Naive thymus-derived CD4-positive, alpha-beta T cell (primary cell): ENCODE measurements at regions of chr16 and their contacts with region 1.

Region 1: GRCh38 chr16:23803591-23804123 is 32.1 kb upstream of the PRKCB start:
- DNase-seq: peak; percentile 39 to 71 (median 60)
- ATAC-seq: peak; percentile 94
- H3K4me3 ChIP-seq: no peak overlapping the region
- H3K4me3 Mint-ChIP-seq: peak overlapping the region in 9 of 10 donors; percentile 1 to 57 (median 19)
- H3K27ac ChIP-seq: no peak overlapping the region
- H3K27ac Mint-ChIP-seq: peak overlapping the region in 1 of 9 donors; percentile 7
- H3K4me1 ChIP-seq: peaks cover 0 to 7% of the 10 kb centered on the region in 2 donors
- H3K4me1 Mint-ChIP-seq: peaks cover 6 to 13% (median 11%) of the 10 kb centered on the region in 7 donors
- H3K27me3 ChIP-seq: no peaks in the 10 kb centered on the region
- H3K27me3 Mint-ChIP-seq: peaks cover 0 to 11% (median 0%) of the 10 kb centered on the region in 5 donors

Region 2: GRCh38 chr16:23729503-23730424 is 73.9 kb before region 1 on chr16:
- CTCF ChIA-PET with region 1: no interaction called
- POLR2A ChIA-PET with region 1: no interaction called
- intact Hi-C with region 1: loop called in 1 of 2 experiments (anchors 2 kb)
- DNase-seq: no peak
- ATAC-seq: no peak
- H3K4me3 ChIP-seq: no peak overlapping the region
- H3K4me3 Mint-ChIP-seq: no peak overlapping the region
- H3K27ac ChIP-seq: no peak overlapping the region
- H3K27ac Mint-ChIP-seq: no peak overlapping the region
- H3K4me1 ChIP-seq: no peaks in the 10 kb centered on the region
- H3K4me1 Mint-ChIP-seq: peaks cover 0 to 8% (median 4%) of the 10 kb centered on the region in 7 donors
- H3K27me3 ChIP-seq: no peaks in the 10 kb centered on the region
- H3K27me3 Mint-ChIP-seq: peaks cover 4 to 23% (median 13%) of the 10 kb centered on the region in 5 donors

Region 3: DNA sequence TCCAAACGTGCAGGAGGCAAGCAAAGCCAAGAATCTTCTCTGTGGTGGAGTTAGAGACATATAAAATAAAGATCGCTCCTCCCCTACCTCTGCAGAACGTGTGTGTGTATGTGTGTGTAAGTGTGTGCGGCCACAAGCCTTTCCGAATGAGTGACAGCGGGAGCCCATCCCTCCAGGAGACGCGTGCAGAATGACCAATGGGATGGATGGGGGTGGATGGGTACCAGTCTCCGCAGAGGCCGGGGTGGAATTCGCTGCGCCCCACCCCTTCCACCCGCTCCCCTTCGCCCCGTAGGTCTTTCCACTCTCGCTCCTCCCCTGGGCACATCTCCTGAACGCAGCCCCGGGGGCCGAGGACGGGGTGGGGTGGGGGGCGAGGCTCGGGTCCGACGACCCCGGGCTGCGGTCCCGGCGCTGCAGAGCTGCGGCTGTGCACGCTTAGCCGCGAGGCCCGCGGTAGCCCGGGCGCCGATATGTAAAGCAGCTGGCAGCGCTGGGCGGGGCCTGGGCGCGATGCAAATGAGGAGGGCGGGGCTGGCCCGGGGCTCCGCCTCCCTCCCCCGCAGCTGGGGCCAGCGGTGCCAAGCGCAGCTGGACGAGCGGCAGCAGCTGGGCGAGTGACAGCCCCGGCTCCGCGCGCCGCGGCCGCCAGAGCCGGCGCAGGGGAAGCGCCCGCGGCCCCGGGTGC is 31.9 kb after region 1 on chr16 and contains the start of gene PRKCB:
- CTCF ChIA-PET with region 1: interaction called, 18 read pairs
- POLR2A ChIA-PET with region 1: no interaction called
- intact Hi-C with region 1: loop called (anchors 1 to 2 kb)
- DNase-seq: peak; percentile 83 to 98 (median 90)
- ATAC-seq: peak; percentile 97
- H3K4me3 ChIP-seq: peak within 1 kb of the TSS; percentile 65
- H3K4me3 Mint-ChIP-seq: peak within 1 kb of the TSS; percentile 88 to 100 (median 98)
- H3K27ac ChIP-seq: peak within 1 kb of the TSS; percentile 65
- H3K27ac Mint-ChIP-seq: peak within 1 kb of the TSS; percentile 69 to 95 (median 85)
- H3K4me1 ChIP-seq: peaks cover 25 to 35% of the 10 kb centered on the region in 2 donors
- H3K4me1 Mint-ChIP-seq: peaks cover 52 to 65% (median 60%) of the 10 kb centered on the region in 7 donors
- H3K27me3 ChIP-seq: no peaks in the 10 kb centered on the region
- H3K27me3 Mint-ChIP-seq: peaks cover 0 to 3% (median 0%) of the 10 kb centered on the region in 5 donors
- total RNA-seq, gene PRKCB: 72.5 to 180 (median 73.1) TPM

Region 4: GRCh38 chr16:23877107-23878090 is 73.7 kb after region 1 on chr16:
- CTCF ChIA-PET with region 1: interaction called, 17 read pairs
- POLR2A ChIA-PET with region 1: no interaction called
- intact Hi-C with region 1: loop called in 1 of 2 experiments (anchors 1 kb)
- DNase-seq: peak in 5 of 9 donors; percentile 31 to 43 (median 35)
- ATAC-seq: peak; percentile 43
- H3K4me3 ChIP-seq: no peak overlapping the region
- H3K4me3 Mint-ChIP-seq: peak overlapping the region in 1 of 10 donors; percentile 1
- H3K27ac ChIP-seq: no peak overlapping the region
- H3K27ac Mint-ChIP-seq: peak overlapping the region in 6 of 9 donors; percentile 10 to 93 (median 74)
- H3K4me1 ChIP-seq: peaks cover 26 to 27% of the 10 kb centered on the region in 2 donors
- H3K4me1 Mint-ChIP-seq: peaks cover 53 to 77% (median 71%) of the 10 kb centered on the region in 7 donors
- H3K27me3 ChIP-seq: no peaks in the 10 kb centered on the region
- H3K27me3 Mint-ChIP-seq: no peaks in the 10 kb centered on the region

Region 5: GRCh38 chr16:24010440-24011089 is 206.9 kb after region 1 on chr16:
- CTCF ChIA-PET with region 1: interaction called, 180 read pairs
- POLR2A ChIA-PET with region 1: interaction called, 8 read pairs
- intact Hi-C with region 1: loop called (anchors 1 kb)
- DNase-seq: peak; percentile 46 to 82 (median 73)
- ATAC-seq: peak; percentile 58
- H3K4me3 ChIP-seq: no peak overlapping the region
- H3K4me3 Mint-ChIP-seq: no peak overlapping the region
- H3K27ac ChIP-seq: no peak overlapping the region
- H3K27ac Mint-ChIP-seq: peak overlapping the region in 5 of 9 donors; percentile 1 to 78 (median 37)
- H3K4me1 ChIP-seq: peaks cover 41 to 43% of the 10 kb centered on the region in 2 donors
- H3K4me1 Mint-ChIP-seq: peaks cover 46 to 70% (median 57%) of the 10 kb centered on the region in 7 donors
- H3K27me3 ChIP-seq: no peaks in the 10 kb centered on the region
- H3K27me3 Mint-ChIP-seq: no peaks in the 10 kb centered on the region

Region 6: GRCh38 chr16:24041826-24042631 is 238.4 kb after region 1 on chr16:
- CTCF ChIA-PET with region 1: interaction called, 138 read pairs
- POLR2A ChIA-PET with region 1: no interaction called
- intact Hi-C with region 1: no loop called
- DNase-seq: peak; percentile 37 to 78 (median 62)
- ATAC-seq: peak; percentile 96
- H3K4me3 ChIP-seq: no peak overlapping the region
- H3K4me3 Mint-ChIP-seq: peak overlapping the region in 1 of 10 donors; percentile 21
- H3K27ac ChIP-seq: no peak overlapping the region
- H3K27ac Mint-ChIP-seq: no peak overlapping the region
- H3K4me1 ChIP-seq: no peaks in the 10 kb centered on the region
- H3K4me1 Mint-ChIP-seq: peaks cover 0 to 24% (median 5%) of the 10 kb centered on the region in 7 donors
- H3K27me3 ChIP-seq: no peaks in the 10 kb centered on the region
- H3K27me3 Mint-ChIP-seq: no peaks in the 10 kb centered on the region

Region 7: DNA sequence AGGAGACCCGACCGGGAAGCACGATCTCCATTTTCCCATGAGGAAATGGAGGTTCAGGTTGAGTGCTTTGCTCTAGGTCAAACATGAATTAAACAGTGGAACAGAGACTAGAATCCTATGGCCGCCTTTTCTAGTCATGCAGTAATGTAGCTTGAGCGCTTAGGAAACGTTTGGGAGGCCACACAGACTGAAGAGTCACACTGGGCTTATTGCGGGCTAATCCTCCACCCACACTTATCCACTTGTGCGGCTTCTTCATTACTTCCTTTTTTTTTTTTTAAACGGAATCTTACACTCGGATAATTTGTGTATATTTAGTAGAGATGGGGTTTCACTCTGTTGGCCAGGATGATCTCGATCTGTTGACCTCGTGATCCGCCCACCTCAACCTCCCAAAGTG is 478.5 kb after region 1 on chr16:
- CTCF ChIA-PET with region 1: no interaction called
- POLR2A ChIA-PET with region 1: no interaction called
- intact Hi-C with region 1: no loop called
- DNase-seq: no peak
- ATAC-seq: no peak
- H3K4me3 ChIP-seq: no peak overlapping the region
- H3K4me3 Mint-ChIP-seq: no peak overlapping the region
- H3K27ac ChIP-seq: no peak overlapping the region
- H3K27ac Mint-ChIP-seq: no peak overlapping the region
- H3K4me1 ChIP-seq: no peaks in the 10 kb centered on the region
- H3K4me1 Mint-ChIP-seq: no peaks in the 10 kb centered on the region
- H3K27me3 ChIP-seq: no peaks in the 10 kb centered on the region
- H3K27me3 Mint-ChIP-seq: peaks cover 4 to 41% (median 24%) of the 10 kb centered on the region in 5 donors

Region 8: DNA sequence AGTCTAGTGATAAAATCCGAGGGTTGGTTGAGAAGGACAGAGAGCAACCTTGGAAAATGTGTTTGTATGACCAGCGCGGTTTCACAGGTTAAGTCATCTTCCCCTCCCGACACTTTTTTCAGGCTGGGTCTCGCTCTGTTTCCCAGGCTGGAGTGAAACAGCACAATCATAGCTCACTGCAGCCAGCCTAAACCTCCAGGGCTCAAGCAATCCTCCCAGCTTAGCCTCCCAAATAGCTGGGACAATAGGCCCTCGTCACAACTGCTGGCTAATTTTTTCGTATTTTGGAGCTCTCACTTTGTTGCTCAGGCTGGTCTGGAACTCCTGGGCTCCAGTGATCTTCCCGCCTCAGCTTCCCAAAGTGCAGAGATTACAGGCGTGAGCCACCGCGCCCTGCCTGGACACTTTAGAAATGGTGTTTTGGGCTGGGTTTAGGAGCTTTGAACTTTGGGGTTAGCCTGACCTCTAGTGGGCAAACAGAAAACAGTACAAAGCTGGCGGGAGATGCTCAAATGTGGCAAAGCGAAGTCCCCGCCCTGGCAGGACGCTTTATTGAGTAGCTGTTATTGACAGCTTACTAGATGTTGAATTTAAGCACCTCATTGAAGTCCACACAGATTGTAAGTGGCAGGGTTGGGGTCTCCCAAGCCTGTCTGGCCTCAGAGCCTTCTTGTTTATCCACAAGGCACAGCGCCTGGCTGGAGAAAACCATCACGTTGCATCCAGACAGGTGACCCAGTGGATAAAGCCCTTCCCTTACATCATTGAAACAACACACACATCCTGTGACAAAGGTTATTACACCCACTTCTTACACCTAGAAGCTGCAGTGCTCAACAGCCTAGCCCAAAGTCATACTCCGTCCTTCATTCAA is 701.1 kb after region 1 on chr16:
- CTCF ChIA-PET with region 1: interaction called, 3 read pairs
- POLR2A ChIA-PET with region 1: no interaction called
- intact Hi-C with region 1: loop called in 1 of 2 experiments (anchors 1 kb)
- DNase-seq: peak; percentile 21 to 65 (median 50)
- ATAC-seq: peak; percentile 89
- H3K4me3 ChIP-seq: no peak overlapping the region
- H3K4me3 Mint-ChIP-seq: no peak overlapping the region
- H3K27ac ChIP-seq: no peak overlapping the region
- H3K27ac Mint-ChIP-seq: no peak overlapping the region
- H3K4me1 ChIP-seq: no peaks in the 10 kb centered on the region
- H3K4me1 Mint-ChIP-seq: peaks cover 0 to 4% (median 0%) of the 10 kb centered on the region in 7 donors
- H3K27me3 ChIP-seq: no peaks in the 10 kb centered on the region
- H3K27me3 Mint-ChIP-seq: peaks cover 4 to 17% (median 13%) of the 10 kb centered on the region in 5 donors